OCI-LY7 (cell line): ENCODE measurements at regions of chr18 and their contacts with region 1.

Region 1: DNA sequence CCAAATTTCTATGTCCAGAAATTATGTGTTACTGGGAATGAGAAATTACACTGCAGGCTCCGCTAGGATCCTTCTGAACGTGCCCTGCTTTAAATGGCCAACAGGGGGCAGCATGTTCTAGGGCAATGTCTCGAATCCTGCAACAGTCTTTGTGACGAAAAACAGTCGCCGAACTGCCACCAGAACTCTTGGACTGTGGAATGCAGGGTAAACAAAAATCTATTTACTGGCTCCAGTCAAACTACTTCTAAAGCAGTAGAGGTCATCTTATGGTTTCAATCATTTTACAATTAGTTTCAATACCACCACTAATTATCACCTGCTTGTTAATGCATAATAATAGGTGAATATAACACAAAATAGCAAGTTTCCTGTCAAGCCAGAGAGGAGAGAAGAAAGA is 9.8 kb upstream of the ZNF397 start:
- DNase-seq: peak; percentile 69
- H3K4me3 ChIP-seq: peak overlapping the region; percentile 41
- H3K27ac ChIP-seq: no peak overlapping the region
- H3K4me1 ChIP-seq: no peaks in the 10 kb centered on the region
- CTCF ChIP-seq: peak; percentile 81

Region 2: DNA sequence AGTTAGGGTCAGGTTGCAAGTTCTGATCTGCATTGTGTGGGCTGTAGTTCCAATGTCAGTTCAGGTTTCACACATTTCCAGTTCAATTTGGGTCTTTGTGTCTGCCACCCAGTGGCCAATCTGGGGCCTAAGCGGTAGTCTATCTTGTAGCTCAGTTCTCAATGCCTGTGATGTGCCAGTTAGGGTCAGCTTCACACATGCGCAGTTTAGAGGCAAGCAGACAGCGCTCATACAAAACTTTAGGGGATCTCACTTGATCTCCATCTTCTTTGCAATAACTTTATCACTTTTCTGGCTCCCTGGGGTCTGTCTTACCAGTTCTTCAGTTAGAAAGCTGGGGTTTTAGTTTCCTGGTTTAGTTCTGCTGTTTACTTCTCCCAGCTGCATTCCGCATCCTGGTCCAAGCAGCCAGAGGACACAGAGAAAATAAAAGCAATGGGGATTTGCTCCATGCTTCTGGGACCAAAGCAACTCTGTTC is 124.1 kb after region 1 on chr18:
- CTCF ChIA-PET with region 1: no interaction called
- POLR2A ChIA-PET with region 1: no interaction called
- intact Hi-C with region 1: loop called (anchors 1 kb)
- DNase-seq: peak; percentile 52
- H3K4me3 ChIP-seq: no peak overlapping the region
- H3K27ac ChIP-seq: no peak overlapping the region
- H3K4me1 ChIP-seq: no peaks in the 10 kb centered on the region
- CTCF ChIP-seq: peak; percentile 70

Region 3: DNA sequence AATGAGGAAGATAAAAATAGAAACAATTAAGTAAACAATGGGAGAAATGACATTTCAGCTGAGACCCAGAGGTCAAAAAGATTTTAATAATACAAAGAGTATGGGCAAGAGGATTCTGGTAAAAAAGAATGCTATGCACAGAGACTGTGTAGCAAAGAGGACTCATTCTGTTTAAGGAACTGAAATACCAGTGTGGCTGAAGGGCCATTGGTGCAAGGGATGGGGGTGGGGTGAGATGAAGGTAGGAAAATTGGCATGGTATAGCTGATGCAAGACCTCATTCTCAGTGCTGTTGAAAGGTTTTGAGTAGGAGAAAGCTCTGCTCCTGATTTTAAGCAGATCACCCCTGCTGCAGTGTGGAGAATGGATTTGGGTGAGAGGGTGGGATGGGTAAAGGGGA is 361.2 kb after region 1 on chr18:
- CTCF ChIA-PET with region 1: no interaction called
- POLR2A ChIA-PET with region 1: no interaction called
- intact Hi-C with region 1: no loop called
- DNase-seq: peak; percentile 79
- H3K4me3 ChIP-seq: peak overlapping the region; percentile 59
- H3K27ac ChIP-seq: peak overlapping the region; percentile 69
- H3K4me1 ChIP-seq: peaks cover 51% of the 10 kb centered on the region
- CTCF ChIP-seq: no peak